ENCODE measurements at regions of chr11 and their contacts with region 1.

Region 1: GRCh38 chr11:121194731-121195596 is 93.9 kb downstream of the TECTA start:
- DNase-seq: no peak
- ATAC-seq: peak; percentile 54 to 76 (median 62)
- H3K4me3 ChIP-seq: no peak overlapping the region
- H3K27ac ChIP-seq: no peak overlapping the region
- H3K4me1 ChIP-seq: no peaks in the 10 kb centered on the region
- H3K27me3 ChIP-seq: peaks cover 0 to 12% (median 4%) of the 10 kb centered on the region in 3 donors
- CTCF ChIP-seq: peak; percentile 65

Region 2: DNA sequence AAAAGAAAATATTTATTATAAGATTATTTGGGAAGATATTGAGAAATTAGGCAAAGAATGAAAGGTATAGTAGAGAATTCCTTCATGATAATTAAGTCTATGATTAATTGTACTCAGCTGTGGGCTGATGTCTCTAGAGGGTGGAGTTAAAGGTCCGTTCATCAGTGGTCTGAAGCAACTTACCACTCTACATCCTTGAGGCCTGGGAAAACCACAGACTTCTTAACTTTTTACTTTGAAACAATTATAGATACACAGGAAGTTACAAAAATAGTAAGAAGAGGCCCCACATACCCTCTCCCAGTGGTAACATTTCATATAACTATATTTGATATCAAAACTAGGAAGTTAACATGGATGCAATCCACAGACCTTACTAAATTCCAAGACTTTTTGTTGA is 1299.0 kb before region 1 on chr11:
- intact Hi-C with region 1: loop called in 1 of 2 experiments (anchors 5 kb)
- DNase-seq: no peak
- ATAC-seq: no peak
- H3K4me3 ChIP-seq: no peak overlapping the region
- H3K27ac ChIP-seq: no peak overlapping the region
- H3K4me1 ChIP-seq: no peaks in the 10 kb centered on the region
- H3K27me3 ChIP-seq: peaks cover 0 to 11% (median 4%) of the 10 kb centered on the region in 3 donors
- CTCF ChIP-seq: no peak

Region 3: GRCh38 chr11:120500414-120501071 is 694.4 kb before region 1 on chr11:
- intact Hi-C with region 1: loop called in 1 of 2 experiments (anchors 10 kb)
- DNase-seq: peak in 1 of 2 donors; percentile 55
- ATAC-seq: no peak
- H3K4me3 ChIP-seq: no peak overlapping the region
- H3K27ac ChIP-seq: no peak overlapping the region
- H3K4me1 ChIP-seq: no peaks in the 10 kb centered on the region
- H3K27me3 ChIP-seq: peaks cover 0 to 47% (median 0%) of the 10 kb centered on the region in 3 donors
- CTCF ChIP-seq: no peak

Region 4: DNA sequence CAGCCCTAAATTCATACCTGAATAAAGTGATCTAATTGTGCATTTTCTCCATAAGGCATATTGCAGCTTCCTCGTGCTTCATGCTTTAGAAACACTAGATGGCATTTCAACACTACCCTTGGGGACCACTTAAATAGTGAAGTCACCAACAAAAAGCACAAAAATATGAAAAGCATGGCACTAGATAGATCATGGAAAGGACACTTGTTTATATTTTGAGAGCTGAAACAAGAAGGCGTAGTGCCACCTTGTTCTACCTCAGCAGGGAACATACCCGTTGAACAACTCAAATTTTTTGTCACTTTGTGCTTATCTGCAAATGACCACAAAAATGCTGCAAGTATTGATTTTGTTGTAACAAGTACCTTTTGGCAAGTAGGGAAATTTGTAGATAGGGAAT is 162.4 kb before region 1 on chr11:
- intact Hi-C with region 1: no loop called
- DNase-seq: no peak
- ATAC-seq: no peak
- H3K4me3 ChIP-seq: no peak overlapping the region
- H3K27ac ChIP-seq: no peak overlapping the region
- H3K4me1 ChIP-seq: no peaks in the 10 kb centered on the region
- H3K27me3 ChIP-seq: no peaks in the 10 kb centered on the region
- CTCF ChIP-seq: no peak